Adrenal gland (tissue), 19 donors: ENCODE measurements at regions of chr2 and their contacts with region 1.

Region 1: DNA sequence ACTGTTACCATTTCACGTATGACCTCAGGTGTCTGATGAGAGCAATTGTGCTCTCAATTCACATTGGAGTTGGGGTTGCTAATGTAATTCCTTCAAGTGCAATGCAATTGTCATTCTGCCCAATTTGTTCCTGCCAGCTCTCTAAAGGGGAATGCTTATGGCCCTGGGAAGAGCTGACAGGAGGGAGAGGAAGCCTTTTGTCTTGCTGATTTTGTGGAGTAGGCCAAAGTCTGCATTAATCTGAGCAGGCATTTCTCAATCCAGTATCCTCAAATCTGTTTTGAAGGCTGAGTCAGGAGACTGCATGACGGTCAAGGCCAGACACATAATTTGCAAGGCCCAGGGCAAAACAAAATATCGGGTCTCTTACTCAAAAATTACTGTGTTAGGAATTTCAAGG is 326.4 kb upstream of the SPHKAP start:
- DNase-seq: peak in 6 of 7 donors; percentile 43 to 65 (median 54)
- H3K4me3 ChIP-seq: no peak overlapping the region
- H3K27ac ChIP-seq: peak overlapping the region in 4 of 5 donors; percentile 49 to 70 (median 53)
- H3K4me1 ChIP-seq: peaks cover 41 to 43% of the 10 kb centered on the region in 2 donors
- H3K27me3 ChIP-seq: no peaks in the 10 kb centered on the region
- CTCF ChIP-seq: no peak
- POLR2A ChIP-seq: no peak

Region 2: GRCh38 chr2:228079194-228079593 is 428.7 kb before region 1 on chr2:
- intact Hi-C with region 1: no loop called
- DNase-seq: no peak
- H3K4me3 ChIP-seq: no peak overlapping the region
- H3K27ac ChIP-seq: no peak overlapping the region
- H3K4me1 ChIP-seq: no peaks in the 10 kb centered on the region
- H3K27me3 ChIP-seq: no peaks in the 10 kb centered on the region
- CTCF ChIP-seq: no peak
- POLR2A ChIP-seq: no peak

Region 3: GRCh38 chr2:228367356-228367755 is 140.5 kb before region 1 on chr2:
- intact Hi-C with region 1: no loop called
- DNase-seq: no peak
- H3K4me3 ChIP-seq: no peak overlapping the region
- H3K27ac ChIP-seq: no peak overlapping the region
- H3K4me1 ChIP-seq: no peaks in the 10 kb centered on the region
- H3K27me3 ChIP-seq: no peaks in the 10 kb centered on the region
- CTCF ChIP-seq: no peak
- POLR2A ChIP-seq: no peak

Region 4: GRCh38 chr2:228465408-228465807 is 42.5 kb before region 1 on chr2:
- intact Hi-C with region 1: no loop called
- DNase-seq: no peak
- H3K4me3 ChIP-seq: no peak overlapping the region
- H3K27ac ChIP-seq: no peak overlapping the region
- H3K4me1 ChIP-seq: no peaks in the 10 kb centered on the region
- H3K27me3 ChIP-seq: no peaks in the 10 kb centered on the region
- CTCF ChIP-seq: no peak
- POLR2A ChIP-seq: no peak

Region 5: DNA sequence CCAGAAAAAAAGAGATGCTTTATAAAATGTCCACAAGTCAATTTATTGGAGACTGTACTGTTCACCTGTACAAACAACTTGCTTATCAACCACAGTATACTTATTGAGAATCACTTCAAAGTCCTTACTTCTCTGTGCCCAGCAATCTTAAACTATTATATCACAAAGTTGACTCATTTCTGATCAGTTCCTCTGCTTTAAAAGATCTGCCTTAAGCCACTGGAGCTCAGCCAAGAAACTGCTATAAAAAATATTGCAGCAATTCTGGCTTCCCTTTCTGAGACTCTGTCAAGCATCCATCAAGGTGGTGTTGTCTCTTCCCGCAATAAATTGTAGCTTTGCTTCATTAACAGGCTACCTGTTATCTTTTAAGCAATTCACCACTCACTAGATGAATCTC is 48.8 kb after region 1 on chr2:
- intact Hi-C with region 1: loop called in 1 of 2 experiments (anchors 10 kb)
- DNase-seq: peak in 2 of 7 donors; percentile 18 to 42
- H3K4me3 ChIP-seq: no peak overlapping the region
- H3K27ac ChIP-seq: no peak overlapping the region
- H3K4me1 ChIP-seq: peaks cover 13 to 15% of the 10 kb centered on the region in 2 donors
- H3K27me3 ChIP-seq: no peaks in the 10 kb centered on the region
- CTCF ChIP-seq: no peak
- POLR2A ChIP-seq: no peak

Region 6: DNA sequence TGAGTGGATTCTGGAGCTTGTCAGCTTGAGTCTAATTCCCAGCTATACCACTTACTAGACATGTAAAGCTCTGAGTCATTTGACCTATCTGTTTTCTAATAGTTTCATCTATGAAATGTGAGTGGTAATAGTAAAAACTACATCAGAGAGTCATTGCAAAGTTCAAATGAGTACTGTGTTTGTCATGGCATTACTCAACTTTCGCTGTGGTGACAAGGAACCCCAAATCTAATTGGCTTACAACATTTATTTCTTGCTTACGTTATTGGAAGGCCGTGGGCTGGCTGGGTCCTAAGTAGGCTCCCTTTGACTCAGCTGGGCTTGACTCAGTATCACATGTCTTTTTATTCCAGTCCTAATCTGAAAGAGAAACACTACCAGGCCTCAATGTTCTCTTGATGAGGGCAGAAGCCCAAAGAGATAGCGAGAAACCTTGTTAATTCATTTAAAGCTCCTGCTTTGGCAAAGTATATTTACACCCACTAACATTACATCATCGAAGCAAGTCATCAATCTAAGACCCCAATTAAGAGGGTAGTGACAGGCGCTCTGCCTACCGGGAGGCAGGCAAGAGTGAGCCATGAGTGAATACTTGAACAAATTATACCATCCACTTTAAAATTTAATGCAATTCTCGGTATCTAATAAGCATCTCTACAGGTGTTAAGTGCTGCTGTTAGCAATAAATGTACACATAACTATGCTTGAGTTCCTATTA is 105.4 kb after region 1 on chr2:
- intact Hi-C with region 1: no loop called
- DNase-seq: no peak
- H3K4me3 ChIP-seq: no peak overlapping the region
- H3K27ac ChIP-seq: no peak overlapping the region
- H3K4me1 ChIP-seq: no peaks in the 10 kb centered on the region
- H3K27me3 ChIP-seq: no peaks in the 10 kb centered on the region
- CTCF ChIP-seq: no peak
- POLR2A ChIP-seq: no peak